Stomach (tissue), 19 donors: ENCODE measurements at regions of chr6 and their contacts with region 1.

Region 1: DNA sequence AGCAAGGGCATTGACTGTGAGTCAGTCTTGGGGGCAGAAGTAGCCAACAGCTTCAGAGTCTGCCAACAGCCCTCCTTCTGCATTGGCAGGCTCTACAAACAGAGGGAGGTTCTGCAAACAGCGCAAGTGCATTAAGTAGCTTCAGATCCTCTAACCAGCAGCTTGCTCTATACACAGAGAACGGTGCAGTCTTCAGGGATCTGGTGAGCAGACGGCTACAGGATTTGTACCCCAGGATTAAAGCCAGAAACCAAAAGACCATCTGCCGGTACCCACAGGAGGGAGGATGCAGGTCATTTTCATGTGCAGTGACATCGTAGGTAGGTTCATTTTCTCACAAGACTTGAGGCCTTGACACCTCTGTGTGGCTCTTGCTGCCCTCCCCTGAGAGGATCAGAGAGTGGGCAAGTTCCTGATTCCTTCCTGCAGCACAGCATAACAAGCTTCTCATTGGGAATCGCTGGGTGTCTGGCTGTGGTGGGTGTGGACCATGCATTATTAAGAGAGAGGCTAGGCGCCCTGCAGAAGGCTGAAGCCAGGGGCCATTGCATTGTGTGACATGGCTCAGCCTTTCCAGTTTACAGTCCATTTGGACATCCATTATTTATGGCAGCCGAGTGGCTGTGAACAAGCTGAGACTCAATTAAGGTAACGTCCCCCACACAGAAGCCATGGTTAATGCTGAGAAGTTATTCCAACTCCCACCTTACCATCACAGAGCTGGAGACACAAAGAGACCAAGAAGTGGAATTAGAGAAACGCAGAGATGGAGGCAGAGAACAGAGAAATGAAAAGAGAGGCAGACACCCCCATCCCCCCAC is 250.0 kb downstream of the LRFN2 start:
- DNase-seq: no peak
- H3K4me3 ChIP-seq: no peak overlapping the region
- H3K27ac ChIP-seq: no peak overlapping the region
- H3K4me1 ChIP-seq: no peaks in the 10 kb centered on the region
- H3K27me3 ChIP-seq: peaks cover 0 to 37% (median 4%) of the 10 kb centered on the region in 3 donors
- CTCF ChIP-seq: no peak
- EP300 ChIP-seq: no peak
- POLR2A ChIP-seq: no peak

Region 2: GRCh38 chr6:40395066-40395704 is 58.0 kb after region 1 on chr6:
- intact Hi-C with region 1: no loop called
- DNase-seq: peak in 1 of 2 donors; percentile 36
- H3K4me3 ChIP-seq: no peak overlapping the region
- H3K27ac ChIP-seq: peak overlapping the region in 2 of 5 donors; percentile 43 to 66
- H3K4me1 ChIP-seq: peaks cover 5 to 59% (median 44%) of the 10 kb centered on the region in 4 donors
- H3K27me3 ChIP-seq: peaks cover 0 to 17% (median 0%) of the 10 kb centered on the region in 3 donors
- CTCF ChIP-seq: no peak
- EP300 ChIP-seq: no peak
- POLR2A ChIP-seq: no peak

Region 3: GRCh38 chr6:40587240-40588069 is 250.3 kb after region 1 on chr6 and contains the start of gene LRFN2:
- intact Hi-C with region 1: loop called (anchors 10 kb)
- DNase-seq: peak; percentile 83 to 95
- H3K4me3 ChIP-seq: peak within 1 kb of the TSS; percentile 45 to 61 (median 50)
- H3K27ac ChIP-seq: peak within 1 kb of the TSS; percentile 64 to 78 (median 78)
- H3K4me1 ChIP-seq: peaks cover 18 to 29% (median 25%) of the 10 kb centered on the region in 4 donors
- H3K27me3 ChIP-seq: peaks cover 0 to 73% (median 25%) of the 10 kb centered on the region in 3 donors
- CTCF ChIP-seq: peak in 5 of 7 experiments; percentile 28 to 89 (median 80)
- EP300 ChIP-seq: no peak
- POLR2A ChIP-seq: no peak
- total RNA-seq, gene LRFN2: not detected